HepG2 (cell line): ENCODE measurements at regions of chr1 and their contacts with region 1.

Region 1: DNA sequence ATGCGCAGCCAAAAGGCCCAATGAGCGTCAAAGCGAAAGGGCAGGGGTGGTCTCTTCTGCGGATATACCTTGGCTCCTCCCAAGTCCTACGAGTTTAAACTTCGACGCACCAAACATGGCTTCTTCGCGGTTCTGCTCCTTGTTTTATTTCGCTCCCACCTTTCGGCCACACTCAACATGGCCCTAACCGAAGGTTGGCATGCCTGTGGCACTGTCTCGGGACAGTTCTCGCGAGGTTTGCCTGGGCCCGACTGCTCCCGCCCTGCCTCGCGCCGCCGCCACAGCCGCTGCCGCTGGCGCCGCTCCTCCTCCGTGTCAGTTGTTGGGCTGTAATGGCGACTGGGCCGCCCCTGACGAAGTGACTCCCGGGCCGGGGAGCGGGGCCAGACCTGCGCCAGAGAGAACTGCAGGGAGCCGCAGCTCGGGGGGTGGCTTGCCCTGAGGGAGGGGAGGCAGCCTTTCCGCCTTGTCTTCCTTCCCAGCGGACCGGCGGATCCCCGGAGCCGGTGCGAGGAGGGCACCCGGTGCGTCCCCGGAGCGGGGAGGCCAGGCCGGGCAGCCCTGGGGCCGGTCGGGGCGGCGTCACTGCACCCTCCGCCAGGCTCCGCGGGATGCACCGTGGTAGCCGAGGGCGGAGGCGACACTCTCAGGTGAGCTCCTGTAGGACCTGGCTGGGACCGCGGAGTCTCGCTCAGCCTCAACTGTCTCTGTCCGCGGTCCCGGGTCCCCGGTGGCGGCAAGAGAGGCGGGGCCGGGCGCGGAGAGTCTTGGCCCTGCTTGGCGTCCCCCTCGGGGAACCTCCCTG is at the start of gene CEP350:
- DNase-seq: peak; percentile 98
- ATAC-seq: peak; percentile 98
- H3K4me3 ChIP-seq: peak within 1 kb of the TSS; percentile 96 to 99 (median 98)
- H3K27ac ChIP-seq: peak within 1 kb of the TSS; percentile 86
- H3K4me1 ChIP-seq: peaks cover 20% of the 10 kb centered on the region
- H3K27me3 ChIP-seq: no peaks in the 10 kb centered on the region; a peak in 1 of 5 replicates
- CTCF ChIP-seq: 0 out of 2 replicates have a peak, but pooled peaks have one; percentile 10
- EP300 ChIP-seq: no peak
- POLR2A ChIP-seq: peak; percentile 72 to 90
- RAD21 ChIP-seq: no peak; the same call in 1 of the 2 replicates
- total RNA-seq, gene CEP350: 35.9 and 46.6 TPM in 2 replicates

Region 2: DNA sequence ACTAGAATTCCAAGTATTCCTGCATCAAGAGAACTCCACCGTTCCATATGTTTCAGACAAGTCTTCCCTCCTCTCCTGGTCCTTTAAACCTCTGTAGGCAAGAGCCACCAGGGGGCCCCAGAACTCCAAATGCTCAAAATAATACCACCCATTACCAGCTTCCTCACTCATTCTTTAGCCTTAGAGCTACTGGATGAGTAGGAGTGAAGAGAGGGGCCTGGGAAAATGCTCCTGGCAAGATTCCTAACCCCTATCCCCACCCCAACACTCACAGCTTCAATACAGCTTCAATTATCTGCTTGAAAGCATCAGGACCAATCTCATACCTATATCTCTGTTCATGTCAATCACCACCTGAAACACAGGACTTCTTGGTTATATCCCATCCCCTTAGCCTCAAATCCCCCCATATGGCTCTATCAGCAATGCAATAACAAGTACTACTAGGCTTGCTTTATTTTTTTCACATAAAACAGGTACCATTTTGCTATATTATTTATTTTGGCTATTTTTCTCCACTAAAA is 86.8 kb before region 1 on chr1:
- CTCF ChIA-PET with region 1: no interaction called
- POLR2A ChIA-PET with region 1: interaction called, 3 read pairs
- in situ Hi-C with region 1: no loop called
- intact Hi-C with region 1: loop called (anchors 1 kb)
- DNase-seq: peak; percentile 58
- ATAC-seq: peak; percentile 96
- H3K4me3 ChIP-seq: no peak overlapping the region
- H3K27ac ChIP-seq: no peak overlapping the region
- H3K4me1 ChIP-seq: peaks cover 27% of the 10 kb centered on the region
- H3K27me3 ChIP-seq: no peaks in the 10 kb centered on the region
- CTCF ChIP-seq: peak; percentile 71
- EP300 ChIP-seq: no peak
- POLR2A ChIP-seq: no peak
- RAD21 ChIP-seq: peak; percentile 54

Region 3: DNA sequence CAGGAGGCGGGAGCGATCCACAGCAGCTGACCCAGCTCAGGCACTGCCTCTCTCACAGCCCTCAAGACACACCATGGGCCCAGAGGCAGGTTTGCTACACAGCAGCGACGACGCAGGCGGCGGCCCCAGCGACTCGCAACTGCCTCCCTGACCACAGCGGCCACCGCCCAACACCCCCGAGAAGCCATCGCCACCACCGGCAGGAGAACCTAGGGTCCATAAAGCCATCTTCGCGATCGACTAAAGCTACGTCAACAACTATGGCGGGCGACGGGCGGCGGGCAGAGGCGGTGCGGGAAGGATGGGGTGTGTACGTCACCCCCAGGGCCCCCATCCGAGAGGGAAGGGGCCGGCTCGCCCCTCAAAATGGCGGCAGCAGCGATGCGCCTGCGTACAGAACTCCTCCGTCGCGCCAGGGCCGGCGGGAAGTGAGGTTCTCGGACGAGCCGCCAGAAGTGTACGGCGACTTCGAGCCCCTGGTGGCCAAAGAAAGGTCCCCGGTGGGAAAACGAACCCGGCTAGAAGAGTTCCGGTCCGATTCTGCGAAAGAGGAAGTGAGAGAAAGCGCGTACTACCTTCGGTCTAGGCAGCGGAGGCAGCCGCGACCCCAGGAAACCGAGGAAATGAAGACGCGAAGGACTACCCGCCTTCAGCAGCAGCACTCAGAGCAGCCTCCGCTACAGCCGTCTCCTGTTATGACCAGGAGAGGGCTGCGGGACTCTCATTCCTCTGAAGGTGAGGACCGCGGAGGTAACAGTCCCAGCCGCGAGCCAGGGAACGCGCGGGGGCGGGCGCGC is 72.3 kb before region 1 on chr1 and contains the start of gene TOR1AIP1:
- CTCF ChIA-PET with region 1: no interaction called
- POLR2A ChIA-PET with region 1: interaction called, 23 read pairs
- in situ Hi-C with region 1: no loop called
- intact Hi-C with region 1: loop called (anchors 2 kb)
- DNase-seq: peak; percentile 93
- ATAC-seq: peak; percentile 82
- H3K4me3 ChIP-seq: peak within 1 kb of the TSS; percentile 82 to 92 (median 90)
- H3K27ac ChIP-seq: peak within 1 kb of the TSS; percentile 97
- H3K4me1 ChIP-seq: peaks cover 27% of the 10 kb centered on the region
- H3K27me3 ChIP-seq: no peaks in the 10 kb centered on the region; a peak in 1 of 5 replicates
- CTCF ChIP-seq: peak; percentile 57
- EP300 ChIP-seq: no peak; a peak in 2 of 4 replicates
- POLR2A ChIP-seq: peak; percentile 83
- RAD21 ChIP-seq: peak; percentile 64
- total RNA-seq, gene TOR1AIP1: 23.8 and 29.0 TPM in 2 replicates

Region 4: GRCh38 chr1:180027949-180028445 is 73.3 kb after region 1 on chr1:
- CTCF ChIA-PET with region 1: no interaction called
- POLR2A ChIA-PET with region 1: no interaction called
- in situ Hi-C with region 1: no loop called
- intact Hi-C with region 1: loop called (anchors 10 kb)
- DNase-seq: no peak
- ATAC-seq: no peak
- H3K4me3 ChIP-seq: no peak overlapping the region
- H3K27ac ChIP-seq: no peak overlapping the region
- H3K4me1 ChIP-seq: no peaks in the 10 kb centered on the region
- H3K27me3 ChIP-seq: no peaks in the 10 kb centered on the region
- CTCF ChIP-seq: no peak
- EP300 ChIP-seq: no peak
- POLR2A ChIP-seq: no peak
- RAD21 ChIP-seq: no peak

Region 5: GRCh38 chr1:180154325-180155181 is 199.9 kb after region 1 on chr1 and contains the start of gene QSOX1:
- CTCF ChIA-PET with region 1: no interaction called
- POLR2A ChIA-PET with region 1: no interaction called
- in situ Hi-C with region 1: no loop called
- intact Hi-C with region 1: loop called (anchors 10 kb)
- DNase-seq: peak; percentile 59
- ATAC-seq: peak; percentile 76
- H3K4me3 ChIP-seq: peak within 1 kb of the TSS; percentile 65 to 88 (median 69)
- H3K27ac ChIP-seq: peak within 1 kb of the TSS; percentile 48
- H3K4me1 ChIP-seq: peaks cover 62% of the 10 kb centered on the region
- H3K27me3 ChIP-seq: peaks cover 0 to 61% of the 10 kb centered on the region in 2 experiments; a peak in 4 of 5 replicates
- CTCF ChIP-seq: peak; percentile 26; the same call in 1 of the 2 replicates
- EP300 ChIP-seq: no peak
- POLR2A ChIP-seq: peak; percentile 9 to 78; a peak in 3 of 4 replicates
- RAD21 ChIP-seq: no peak
- total RNA-seq, gene QSOX1: 2.6 and 6.8 TPM in 2 replicates